ENCODE measurements at regions of chrX and their contacts with region 1.

Region 1: DNA sequence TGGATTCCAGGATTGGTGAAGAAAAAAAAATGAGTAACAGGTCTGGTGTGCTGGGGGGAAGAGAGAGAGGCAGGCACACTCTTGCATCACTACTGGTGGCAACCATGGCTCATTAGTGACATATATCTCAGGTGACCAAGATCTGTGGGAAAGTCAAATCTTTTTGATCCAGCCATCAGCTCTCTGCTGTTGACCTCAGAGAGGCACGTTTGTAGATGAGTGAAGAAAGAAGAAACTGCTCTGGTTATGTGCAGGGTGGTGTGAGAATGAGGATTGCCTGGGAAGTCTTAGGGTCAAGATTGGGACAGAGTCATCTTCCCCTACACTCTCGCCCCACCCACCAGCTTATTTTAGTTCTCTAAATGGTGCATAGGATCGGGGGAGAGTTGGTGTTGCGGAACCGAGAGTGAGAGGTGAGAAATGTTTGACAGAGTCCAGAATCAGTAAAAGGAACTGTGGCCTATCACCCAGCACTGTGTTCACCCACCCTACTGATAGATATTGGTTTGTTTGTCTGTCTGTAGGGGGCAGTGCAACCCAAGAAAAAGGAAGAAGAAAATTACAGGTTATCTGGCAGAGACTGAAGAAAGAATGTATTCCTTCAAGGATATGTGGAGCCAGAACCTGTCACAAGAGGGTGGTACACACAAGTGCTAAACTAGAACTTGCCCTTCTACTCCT is 21.9 kb downstream of the ARMCX6 start:
- DNase-seq: peak; percentile 18 to 68 (median 32)
- ATAC-seq: peak; percentile 87
- H3K4me3 ChIP-seq: no peak overlapping the region
- H3K27ac ChIP-seq: no peak overlapping the region
- H3K4me1 ChIP-seq: no peaks in the 10 kb centered on the region
- H3K27me3 ChIP-seq: no peaks in the 10 kb centered on the region
- CTCF ChIP-seq: peak; percentile 47 to 77 (median 58); a peak in 5 of 6 replicates
- EP300 ChIP-seq: no peak
- POLR2A ChIP-seq: no peak
- RAD21 ChIP-seq: peak; percentile 66 to 82

Region 2: GRCh38 chrX:101206471-101206870 is 389.4 kb before region 1 on chrX:
- CTCF ChIA-PET with region 1: no interaction called
- POLR2A ChIA-PET with region 1: no interaction called
- in situ Hi-C with region 1: no loop called
- intact Hi-C with region 1: no loop called
- DNase-seq: peak; percentile 19 to 51 (median 32)
- ATAC-seq: peak; percentile 94
- H3K4me3 ChIP-seq: no peak overlapping the region
- H3K27ac ChIP-seq: no peak overlapping the region
- H3K4me1 ChIP-seq: no peaks in the 10 kb centered on the region
- H3K27me3 ChIP-seq: no peaks in the 10 kb centered on the region
- CTCF ChIP-seq: peak; percentile 48 to 79 (median 64); a peak in 5 of 6 replicates
- EP300 ChIP-seq: no peak
- POLR2A ChIP-seq: no peak
- RAD21 ChIP-seq: peak; percentile 56 to 83

Region 3: GRCh38 chrX:101564651-101565165 is 31.2 kb before region 1 on chrX:
- CTCF ChIA-PET with region 1: no interaction called
- POLR2A ChIA-PET with region 1: no interaction called
- in situ Hi-C with region 1: no loop called
- intact Hi-C with region 1: no loop called
- DNase-seq: no peak
- ATAC-seq: no peak
- H3K4me3 ChIP-seq: no peak overlapping the region
- H3K27ac ChIP-seq: no peak overlapping the region
- H3K4me1 ChIP-seq: no peaks in the 10 kb centered on the region
- H3K27me3 ChIP-seq: no peaks in the 10 kb centered on the region
- CTCF ChIP-seq: no peak
- EP300 ChIP-seq: no peak
- POLR2A ChIP-seq: no peak
- RAD21 ChIP-seq: no peak

Region 4: DNA sequence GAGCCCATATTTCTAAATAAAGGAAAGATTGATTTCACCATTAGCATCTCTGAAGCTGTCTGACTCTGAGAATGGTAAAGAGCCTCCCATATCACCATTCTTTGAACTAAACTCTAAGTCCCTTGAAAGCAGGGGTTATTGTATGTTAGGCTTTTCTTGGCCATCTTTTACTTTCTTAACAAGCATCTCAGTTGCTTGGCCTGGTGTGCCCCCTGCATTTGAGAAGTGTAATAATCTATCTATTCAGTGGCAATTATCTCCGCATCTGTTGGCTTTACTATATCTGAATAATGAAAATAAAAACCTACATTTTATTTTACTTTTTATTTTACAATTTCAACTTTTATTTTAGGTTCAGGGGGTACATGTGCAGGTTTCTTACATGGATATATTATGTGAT is 192.1 kb after region 1 on chrX:
- CTCF ChIA-PET with region 1: no interaction called
- POLR2A ChIA-PET with region 1: no interaction called
- in situ Hi-C with region 1: no loop called
- intact Hi-C with region 1: no loop called
- DNase-seq: no peak
- ATAC-seq: no peak
- H3K4me3 ChIP-seq: no peak overlapping the region
- H3K27ac ChIP-seq: no peak overlapping the region
- H3K4me1 ChIP-seq: no peaks in the 10 kb centered on the region
- H3K27me3 ChIP-seq: no peaks in the 10 kb centered on the region
- CTCF ChIP-seq: no peak
- EP300 ChIP-seq: no peak
- POLR2A ChIP-seq: no peak
- RAD21 ChIP-seq: no peak

Region 5: DNA sequence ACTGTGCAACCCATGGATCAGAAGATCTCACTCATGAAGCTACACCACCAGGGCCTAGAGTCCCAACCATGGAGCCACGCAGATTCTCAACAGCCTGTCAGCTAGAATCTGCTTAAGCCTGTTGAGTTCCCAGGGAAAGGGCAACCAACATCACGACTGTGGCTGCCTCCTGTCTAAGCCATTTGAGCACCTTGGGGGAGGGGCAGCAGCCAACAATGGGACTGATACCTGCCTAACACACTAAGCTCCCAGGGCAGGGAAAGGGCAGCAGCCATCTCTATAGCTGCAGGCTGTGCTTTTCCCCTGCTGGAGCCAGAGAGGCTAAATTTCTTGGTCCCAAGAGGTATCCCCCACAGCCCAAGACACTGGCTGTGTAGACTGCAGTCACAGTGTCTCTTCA is 433.1 kb after region 1 on chrX:
- CTCF ChIA-PET with region 1: no interaction called
- POLR2A ChIA-PET with region 1: no interaction called
- in situ Hi-C with region 1: no loop called
- intact Hi-C with region 1: no loop called
- DNase-seq: no peak
- ATAC-seq: no peak
- H3K4me3 ChIP-seq: no peak overlapping the region
- H3K27ac ChIP-seq: no peak overlapping the region
- H3K4me1 ChIP-seq: no peaks in the 10 kb centered on the region
- H3K27me3 ChIP-seq: no peaks in the 10 kb centered on the region
- CTCF ChIP-seq: no peak
- EP300 ChIP-seq: no peak
- POLR2A ChIP-seq: no peak
- RAD21 ChIP-seq: no peak

Region 6: GRCh38 chrX:102085706-102086105 is 489.8 kb after region 1 on chrX:
- CTCF ChIA-PET with region 1: no interaction called
- POLR2A ChIA-PET with region 1: no interaction called
- in situ Hi-C with region 1: no loop called
- intact Hi-C with region 1: loop called (anchors 5 kb)
- DNase-seq: peak in 1 of 4 experiments; percentile 7
- ATAC-seq: 0 out of 3 replicates have a peak, but pooled peaks have one; percentile 45
- H3K4me3 ChIP-seq: no peak overlapping the region
- H3K27ac ChIP-seq: no peak overlapping the region
- H3K4me1 ChIP-seq: no peaks in the 10 kb centered on the region
- H3K27me3 ChIP-seq: no peaks in the 10 kb centered on the region
- CTCF ChIP-seq: peak in 1 of 3 experiments; percentile 17; a peak in 1 of 6 replicates
- EP300 ChIP-seq: no peak
- POLR2A ChIP-seq: no peak
- RAD21 ChIP-seq: peak in 1 of 2 experiments; percentile 31; a peak in 2 of 4 replicates

Measured in K562 (cell line).